BJ (cell line): ENCODE measurements at regions of chr17 and their contacts with region 1.

Region 1: DNA sequence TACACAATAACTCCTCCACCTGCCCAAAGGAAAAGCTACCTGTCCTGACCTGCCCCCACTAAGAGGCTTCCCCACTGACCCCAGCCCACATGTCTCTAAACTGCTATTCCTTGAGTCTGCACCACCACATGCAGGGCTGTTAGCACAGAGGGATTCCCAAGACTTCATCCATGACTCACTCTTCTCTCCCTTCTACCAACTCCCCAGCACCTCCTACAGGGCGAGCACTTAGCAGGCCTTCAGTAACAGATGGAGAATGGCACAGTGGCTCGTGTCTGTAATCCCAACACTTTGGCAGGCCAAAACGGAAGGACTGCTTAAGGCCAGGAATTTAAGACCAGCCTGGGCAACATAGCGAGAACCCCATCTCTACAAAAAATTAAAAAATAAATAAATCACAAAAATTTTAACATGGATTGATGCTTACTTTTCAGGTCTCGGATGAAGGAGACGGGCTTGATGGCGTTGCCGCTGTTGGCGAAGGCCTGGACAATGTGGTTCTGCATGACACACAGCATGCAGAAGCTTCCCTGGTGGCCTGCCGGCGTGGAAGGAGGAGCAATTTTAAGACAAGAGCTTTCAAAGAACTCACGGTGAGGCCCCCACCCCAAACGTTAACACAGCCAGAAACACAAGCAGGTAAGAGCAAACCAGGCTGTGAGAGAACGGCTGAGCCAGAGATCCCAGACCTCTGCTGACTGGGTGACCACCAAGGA is 12.0 kb downstream of the USP36 start:
- DNase-seq: no peak
- H3K4me3 ChIP-seq: no peak overlapping the region
- H3K27me3 ChIP-seq: no peaks in the 10 kb centered on the region
- CTCF ChIP-seq: peak; percentile 66

Region 2: GRCh38 chr17:78875363-78876093 is 46.9 kb after region 1 on chr17:
- CTCF ChIA-PET with region 1: no interaction called
- POLR2A ChIA-PET with region 1: interaction called, 19 read pairs
- DNase-seq: no peak
- H3K4me3 ChIP-seq: no peak overlapping the region
- H3K27me3 ChIP-seq: no peaks in the 10 kb centered on the region
- CTCF ChIP-seq: no peak